ENCODE measurements at regions of chr5 and their contacts with region 1.

Region 1: DNA sequence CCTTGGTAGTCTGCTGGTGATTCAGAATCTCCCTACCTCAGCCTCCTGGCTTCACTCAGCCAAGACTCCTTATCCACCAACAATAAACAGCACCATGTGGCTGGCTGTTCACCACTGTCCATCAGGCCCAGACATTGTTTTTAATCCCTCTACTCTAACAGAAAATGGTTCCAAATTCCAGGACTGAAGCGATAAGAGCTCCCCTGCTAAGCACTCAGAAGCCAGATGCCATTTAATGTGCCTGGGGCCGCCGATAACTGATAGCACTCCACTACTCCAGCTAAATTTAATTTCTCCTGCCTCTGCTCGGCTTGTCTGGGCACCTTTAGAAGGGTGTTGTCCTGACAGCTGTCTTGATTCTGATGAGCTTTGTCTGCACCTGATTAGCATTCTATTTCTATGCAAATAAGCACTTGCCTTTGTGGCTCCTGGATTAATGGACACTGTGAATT is 47.1 kb downstream of the ZNF622 start:
- DNase-seq: peak in 4 of 5 donors; percentile 45 to 76 (median 68)
- ATAC-seq: peak; percentile 95 to 97 (median 96)
- H3K4me3 ChIP-seq: no peak overlapping the region
- H3K27ac ChIP-seq: peak overlapping the region in 9 of 12 donors; percentile 54 to 82 (median 71)
- H3K4me1 ChIP-seq: peaks cover 0 to 9% (median 0%) of the 10 kb centered on the region in 12 donors
- H3K27me3 ChIP-seq: no peaks in the 10 kb centered on the region
- CTCF ChIP-seq: no peak
- POLR2A ChIP-seq: no peak

Region 2: DNA sequence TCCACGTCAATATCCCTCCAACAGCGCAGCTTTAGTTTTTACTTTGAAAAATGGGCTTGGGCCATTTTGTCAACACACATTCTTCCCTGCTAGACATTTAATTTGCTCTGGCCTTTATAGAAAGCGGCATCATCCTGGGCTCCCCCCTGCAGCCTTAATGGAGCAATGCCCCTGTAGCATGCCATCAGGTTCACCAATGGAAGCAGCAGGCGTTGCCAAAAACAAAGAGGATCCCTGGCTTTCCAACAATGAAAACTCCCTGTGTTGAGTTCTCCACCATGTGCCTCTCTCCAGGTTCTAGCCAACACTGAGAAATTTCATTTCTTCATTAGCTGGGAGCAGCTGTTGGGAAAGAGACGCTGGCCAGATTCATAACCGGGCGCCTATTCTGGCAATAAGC is 92.4 kb before region 1 on chr5:
- intact Hi-C with region 1: no loop called
- DNase-seq: no peak
- ATAC-seq: no peak
- H3K4me3 ChIP-seq: no peak overlapping the region
- H3K27ac ChIP-seq: no peak overlapping the region
- H3K4me1 ChIP-seq: no peaks in the 10 kb centered on the region
- H3K27me3 ChIP-seq: no peaks in the 10 kb centered on the region
- CTCF ChIP-seq: no peak
- POLR2A ChIP-seq: no peak

Region 3: DNA sequence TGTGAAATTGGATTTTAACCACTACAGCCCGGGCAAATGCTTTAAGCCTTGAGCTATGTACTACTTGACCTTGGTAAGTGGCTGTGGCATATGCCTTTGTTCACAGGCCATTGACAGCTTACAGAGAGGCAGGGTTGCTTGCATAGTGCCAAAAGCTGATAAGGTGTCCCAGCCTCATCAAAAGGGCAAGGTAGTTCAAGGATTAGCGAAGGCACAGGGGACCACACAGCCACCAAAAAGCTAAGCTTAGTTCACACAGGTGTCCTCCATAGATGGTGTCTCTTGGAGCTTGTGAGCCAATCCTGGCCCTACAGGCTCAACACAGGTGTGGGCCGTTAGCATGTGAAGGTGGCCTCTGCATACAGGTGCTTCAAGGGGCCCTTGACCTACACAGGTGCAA is 39.7 kb before region 1 on chr5:
- intact Hi-C with region 1: loop called in 1 of 10 experiments (anchors 1 kb)
- DNase-seq: peak in 4 of 5 donors; percentile 15 to 53 (median 40)
- ATAC-seq: peak; percentile 94 to 99 (median 96)
- H3K4me3 ChIP-seq: no peak overlapping the region
- H3K27ac ChIP-seq: peak overlapping the region in 3 of 12 donors; percentile 11 to 43 (median 38)
- H3K4me1 ChIP-seq: peaks cover 0 to 11% (median 0%) of the 10 kb centered on the region in 12 donors
- H3K27me3 ChIP-seq: no peaks in the 10 kb centered on the region
- CTCF ChIP-seq: no peak
- POLR2A ChIP-seq: no peak

Measured in heart left ventricle (tissue), 16 donors.